Activated CD8-positive, alpha-beta T cell treated with anti-CD3 and anti-CD28 coated beads for 36 hours (primary cell): ENCODE measurements at regions of chr9 and their contacts with region 1.

Region 1: DNA sequence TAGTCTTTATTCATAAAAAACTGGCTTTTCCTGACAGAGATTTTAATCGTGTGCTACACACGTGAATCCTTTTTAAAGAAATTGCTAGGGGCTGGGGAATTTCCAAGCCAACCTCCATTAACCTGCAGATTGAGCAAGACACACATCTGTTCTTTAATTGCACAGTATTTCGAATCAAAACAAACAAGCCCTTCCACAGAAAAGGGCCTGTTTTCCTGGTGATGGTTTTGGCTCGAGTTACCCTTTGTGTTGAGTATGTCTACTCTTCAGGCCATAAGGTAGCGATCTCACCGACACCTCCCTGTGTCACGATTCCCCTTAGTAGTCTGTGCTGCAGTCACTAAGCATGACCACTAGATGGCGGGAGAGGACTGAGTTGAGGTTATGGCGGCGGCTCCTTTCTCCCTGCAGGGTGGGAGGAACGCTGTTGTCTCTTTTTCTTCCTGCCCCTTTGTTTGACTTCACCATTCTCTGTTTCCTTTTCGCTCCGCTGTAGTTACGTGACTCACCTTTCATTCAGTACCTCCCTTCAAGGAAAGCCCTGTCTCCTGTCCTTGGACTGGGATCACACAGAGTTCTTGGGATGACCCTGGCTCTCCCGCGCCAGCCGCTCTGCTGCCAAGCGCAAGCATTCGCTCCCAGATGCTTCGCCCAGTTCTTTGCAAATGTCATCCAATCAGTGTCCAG is 137.1 kb upstream of the SLC24A2 start:
- DNase-seq: peak; percentile 84
- ATAC-seq: peak; percentile 99
- H3K4me3 Mint-ChIP-seq: peak overlapping the region; percentile 58
- H3K27ac Mint-ChIP-seq: no peak overlapping the region
- H3K4me1 Mint-ChIP-seq: peaks cover 10% of the 10 kb centered on the region
- H3K27me3 Mint-ChIP-seq: peaks cover 13% of the 10 kb centered on the region
- CTCF ChIP-seq: peak; percentile 95

Region 2: DNA sequence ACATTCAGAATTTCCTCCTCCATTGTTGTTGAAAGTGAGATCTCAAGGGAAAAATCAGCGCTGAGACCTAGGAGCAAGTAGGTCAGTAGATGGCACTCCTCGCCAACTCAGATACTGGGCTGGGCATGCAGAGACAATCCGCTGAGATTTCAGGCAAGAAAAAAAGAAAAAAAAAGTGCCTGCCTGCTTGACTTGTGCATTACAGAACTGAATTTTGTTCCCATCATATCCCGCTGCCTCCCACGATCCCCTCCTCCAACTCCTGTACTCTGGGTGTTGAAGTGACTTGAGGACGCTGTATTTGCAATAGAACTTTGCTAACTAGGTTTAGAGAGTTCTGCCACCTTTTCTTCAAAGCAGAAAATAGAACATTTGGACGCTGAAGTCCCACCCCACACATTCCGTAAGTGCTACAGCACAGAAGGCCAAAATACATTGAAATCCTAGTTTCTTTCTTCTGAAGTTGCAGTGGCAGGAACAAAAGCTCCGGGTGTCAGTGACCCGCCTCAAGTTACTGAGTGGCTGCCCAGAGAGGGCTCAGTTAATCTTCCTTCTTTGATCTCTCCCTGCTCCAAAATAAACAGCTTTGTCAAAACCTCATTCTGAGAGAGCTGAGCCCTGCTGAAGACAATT is 430.6 kb after region 1 on chr9:
- CTCF ChIA-PET with region 1: interaction called, 3 read pairs
- POLR2A ChIA-PET with region 1: no interaction called
- intact Hi-C with region 1: loop called (anchors 5 kb)
- DNase-seq: peak; percentile 72
- ATAC-seq: peak; percentile 50
- H3K4me3 Mint-ChIP-seq: no peak overlapping the region
- H3K27ac Mint-ChIP-seq: no peak overlapping the region
- H3K4me1 Mint-ChIP-seq: peaks cover 68% of the 10 kb centered on the region
- H3K27me3 Mint-ChIP-seq: no peaks in the 10 kb centered on the region
- CTCF ChIP-seq: peak; percentile 53